Esophagus squamous epithelium (tissue), 5 donors: ENCODE measurements at regions of chr1 and their contacts with region 1.

Region 1: DNA sequence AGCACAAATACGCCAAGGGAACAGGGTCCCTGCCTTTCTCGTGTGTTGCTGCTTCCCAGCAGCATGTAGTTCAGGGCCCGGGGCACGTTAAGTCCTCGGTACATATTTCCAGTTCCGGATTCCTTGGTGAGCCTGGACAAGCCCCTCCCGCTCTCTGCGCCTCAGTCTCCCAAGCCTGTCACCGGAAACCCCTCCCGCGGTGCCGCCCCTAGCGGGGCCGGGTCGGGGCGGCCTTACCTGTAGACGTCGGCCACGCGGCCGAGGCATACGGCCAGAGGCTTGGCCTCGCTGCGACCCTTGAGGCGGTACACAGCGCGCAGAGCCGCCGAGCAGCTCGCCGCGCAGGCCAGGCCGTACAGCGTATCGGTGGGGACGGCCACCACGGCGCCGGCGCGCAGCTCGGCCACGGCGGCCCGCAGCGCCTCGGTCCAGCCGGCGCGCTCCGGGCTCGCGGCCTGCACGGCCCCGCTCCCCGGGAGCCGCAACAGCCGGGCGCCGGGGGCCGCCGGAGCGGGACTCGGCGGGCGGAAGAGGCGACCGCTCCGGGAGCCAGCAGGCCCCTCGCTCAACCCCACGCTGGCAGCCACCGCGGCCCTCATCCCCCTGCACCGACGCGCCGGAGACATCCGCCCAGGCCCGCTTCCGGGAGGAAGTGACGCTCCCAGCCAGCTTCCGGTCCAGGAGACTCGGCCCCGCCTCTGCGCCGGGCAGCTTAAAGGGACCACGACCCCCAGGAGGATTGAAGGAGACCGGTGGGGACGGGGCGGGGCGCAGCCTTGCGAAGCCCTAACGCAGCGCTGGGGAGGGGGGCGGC is at the starts of genes C1orf122 and YRDC:
- DNase-seq: peak; percentile 50
- H3K4me3 ChIP-seq: peak within 1 kb of the TSS; percentile 81 to 94 (median 90)
- H3K27ac ChIP-seq: peak within 1 kb of the TSS; percentile 97 to 99 (median 98)
- H3K4me1 ChIP-seq: peaks cover 6 to 58% (median 20%) of the 10 kb centered on the region in 3 donors
- H3K27me3 ChIP-seq: no peaks in the 10 kb centered on the region
- CTCF ChIP-seq: peak in 2 of 6 experiments; percentile 5 to 6
- POLR2A ChIP-seq: peak in 2 of 4 donors; percentile 77 to 86
- total RNA-seq, gene C1orf122: 40.9 to 60.2 (median 52.1) TPM
- total RNA-seq, gene YRDC: 19.9 to 26.0 (median 21.1) TPM

Region 2: GRCh38 chr1:37692078-37692833 is 115.5 kb before region 1 on chr1 and contains the start of gene CDCA8:
- intact Hi-C with region 1: loop called (anchors 10 kb)
- DNase-seq: peak; percentile 91
- H3K4me3 ChIP-seq: peak within 1 kb of the TSS; percentile 64 to 97 (median 88)
- H3K27ac ChIP-seq: peak within 1 kb of the TSS; percentile 84 to 94 (median 90)
- H3K4me1 ChIP-seq: peaks cover 22 to 43% (median 28%) of the 10 kb centered on the region in 3 donors
- H3K27me3 ChIP-seq: no peaks in the 10 kb centered on the region
- CTCF ChIP-seq: peak; percentile 33 to 87 (median 56)
- POLR2A ChIP-seq: peak in 2 of 4 donors; percentile 14 to 27
- total RNA-seq, gene CDCA8: 3.4 to 15.1 (median 7.5) TPM

Region 3: GRCh38 chr1:37859507-37860345 is 52.0 kb after region 1 on chr1 and contains the start of gene MTF1:
- intact Hi-C with region 1: loop called (anchors 5 kb)
- DNase-seq: peak; percentile 77
- H3K4me3 ChIP-seq: peak within 1 kb of the TSS; percentile 72 to 98 (median 77)
- H3K27ac ChIP-seq: peak within 1 kb of the TSS; percentile 92 to 99 (median 94)
- H3K4me1 ChIP-seq: peaks cover 5 to 76% (median 22%) of the 10 kb centered on the region in 3 donors
- H3K27me3 ChIP-seq: no peaks in the 10 kb centered on the region
- CTCF ChIP-seq: peak; percentile 75 to 94 (median 89)
- POLR2A ChIP-seq: peak in 3 of 4 donors; percentile 76 to 95 (median 87)
- total RNA-seq, gene MTF1: 6.3 to 13.4 (median 9.9) TPM

Region 4: GRCh38 chr1:37914719-37915475 is 107.1 kb after region 1 on chr1:
- intact Hi-C with region 1: no loop called
- DNase-seq: no peak
- H3K4me3 ChIP-seq: no peak overlapping the region
- H3K27ac ChIP-seq: no peak overlapping the region
- H3K4me1 ChIP-seq: peaks cover 0 to 14% (median 0%) of the 10 kb centered on the region in 3 donors
- H3K27me3 ChIP-seq: no peaks in the 10 kb centered on the region
- CTCF ChIP-seq: no peak
- POLR2A ChIP-seq: no peak